PC-3 (cell line): ENCODE measurements at regions of chr5 and their contacts with region 1.

Region 1: DNA sequence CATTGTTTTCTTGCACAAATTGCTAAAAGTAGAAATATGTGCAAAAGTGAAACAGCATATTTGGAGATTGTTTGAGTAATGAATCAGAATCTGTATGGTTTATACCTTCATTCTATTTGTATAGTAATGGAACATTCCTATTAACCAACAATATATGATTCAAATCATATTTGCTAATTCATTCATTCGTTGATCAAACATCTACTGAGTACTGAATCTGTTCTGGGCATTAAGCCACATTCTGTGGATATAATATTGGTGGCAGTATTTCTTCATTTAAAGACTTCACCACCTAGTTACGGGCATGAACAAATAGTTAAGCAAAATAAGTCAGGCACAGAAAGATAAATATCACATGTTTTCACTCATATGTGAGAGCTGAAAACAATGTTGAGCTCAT is 385.7 kb downstream of the MTRR start:
- DNase-seq: peak; percentile 98
- ATAC-seq: peak; percentile 80
- H3K4me3 ChIP-seq: peak overlapping the region; percentile 7; the same call in 1 of the 2 replicates
- H3K27ac ChIP-seq: peak overlapping the region; percentile 80
- H3K4me1 ChIP-seq: peaks cover 29% of the 10 kb centered on the region
- H3K27me3 ChIP-seq: no peaks in the 10 kb centered on the region
- CTCF ChIP-seq: peak; percentile 23; the same call in 1 of the 2 replicates

Region 2: GRCh38 chr5:8363138-8363537 is 108.5 kb after region 1 on chr5:
- CTCF ChIA-PET with region 1: no interaction called
- POLR2A ChIA-PET with region 1: no interaction called
- intact Hi-C with region 1: loop called (anchors 1 kb)
- DNase-seq: peak; percentile 99
- ATAC-seq: peak; percentile 95
- H3K4me3 ChIP-seq: peak overlapping the region; percentile 8; the same call in 1 of the 2 replicates
- H3K27ac ChIP-seq: peak overlapping the region; percentile 86
- H3K4me1 ChIP-seq: peaks cover 38% of the 10 kb centered on the region
- H3K27me3 ChIP-seq: no peaks in the 10 kb centered on the region
- CTCF ChIP-seq: no peak

Region 3: DNA sequence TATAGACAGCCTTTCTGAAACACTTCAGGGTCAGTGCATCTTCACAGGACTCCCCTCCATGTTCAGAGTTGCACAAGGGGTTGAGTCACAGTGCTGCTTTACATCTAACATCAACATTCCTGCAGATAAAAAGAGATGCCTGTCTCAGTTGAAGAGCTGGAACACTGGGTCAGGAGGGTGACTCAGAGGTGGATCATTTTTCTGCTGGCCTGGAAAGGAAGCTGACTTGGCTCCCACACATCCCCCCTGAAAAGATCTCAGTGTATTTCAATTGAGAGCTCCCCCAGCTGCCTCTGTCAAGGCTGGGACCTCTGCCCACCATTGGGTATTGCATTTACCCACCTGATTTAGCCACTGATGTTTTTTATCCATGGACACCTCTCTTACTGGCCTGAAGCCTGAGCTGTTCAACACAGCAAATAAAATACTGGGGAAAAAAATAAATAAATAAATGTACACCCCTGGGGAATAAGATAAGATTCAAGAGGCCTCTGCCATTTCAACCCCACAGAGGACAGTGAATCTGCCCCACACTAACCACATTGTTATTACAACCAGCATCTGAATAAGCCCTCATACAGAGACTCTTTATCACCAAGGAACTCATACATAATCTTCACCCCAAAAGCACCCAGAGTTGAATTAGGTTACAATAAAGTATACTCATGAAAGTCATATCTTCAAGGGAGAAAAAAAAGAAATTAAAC is 574.8 kb after region 1 on chr5:
- CTCF ChIA-PET with region 1: no interaction called
- POLR2A ChIA-PET with region 1: no interaction called
- intact Hi-C with region 1: loop called (anchors 10 kb)
- DNase-seq: peak; percentile 100
- ATAC-seq: peak; percentile 86
- H3K4me3 ChIP-seq: no peak overlapping the region
- H3K27ac ChIP-seq: peak overlapping the region; percentile 80
- H3K4me1 ChIP-seq: peaks cover 71% of the 10 kb centered on the region
- H3K27me3 ChIP-seq: no peaks in the 10 kb centered on the region
- CTCF ChIP-seq: no peak